Endothelial cell of umbilical vein (primary cell): ENCODE measurements at regions of chr9 and their contacts with region 1.

Region 1: DNA sequence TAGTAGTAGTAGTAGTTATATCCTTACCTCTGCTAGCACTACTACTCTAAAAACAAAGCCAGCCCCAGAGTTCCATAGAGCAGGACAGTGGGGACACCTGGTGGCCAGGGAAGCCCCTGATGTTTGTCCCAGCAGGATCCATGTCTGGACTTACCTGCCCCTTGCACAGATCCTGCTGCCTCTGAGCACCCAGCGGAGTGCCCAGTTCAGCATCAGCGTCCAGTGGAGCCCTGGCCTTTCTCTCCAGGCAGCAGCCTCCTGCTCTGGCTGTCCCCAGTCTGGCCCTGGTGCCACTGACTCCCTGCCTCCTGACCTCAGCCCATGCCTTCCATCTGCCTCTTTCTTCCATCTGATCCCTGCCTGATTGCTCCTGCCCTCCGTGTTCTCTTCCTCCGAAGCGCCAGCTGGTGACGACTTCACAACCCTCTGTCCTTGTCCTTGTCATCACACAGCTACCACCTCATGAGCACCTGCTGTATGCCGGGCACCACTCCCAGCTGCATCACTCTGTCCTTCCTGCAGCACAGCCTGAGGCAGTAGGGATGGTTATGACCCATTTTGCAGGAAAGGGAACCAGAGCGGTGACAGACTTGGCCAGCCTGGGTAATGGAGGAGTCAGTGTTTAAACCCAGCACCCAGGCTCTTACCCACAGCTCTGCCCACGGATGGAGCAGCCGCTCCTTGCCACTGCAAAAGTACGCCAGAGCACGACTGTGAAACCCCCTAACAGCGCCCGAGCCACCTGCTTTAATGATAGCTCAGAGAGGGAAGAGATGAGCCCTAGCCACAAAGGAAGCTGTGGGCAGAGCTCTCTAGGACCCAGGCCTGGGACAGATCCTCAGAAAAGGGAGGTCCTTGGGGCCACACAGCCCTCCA is 11.5 kb downstream of the SARDH start:
- DNase-seq: peak; percentile 24
- H3K4me3 ChIP-seq: no peak overlapping the region
- H3K27ac ChIP-seq: no peak overlapping the region
- H3K4me1 ChIP-seq: no peaks in the 10 kb centered on the region
- H3K27me3 ChIP-seq: no peaks in the 10 kb centered on the region
- CTCF ChIP-seq: peak; percentile 28 to 53
- POLR2A ChIP-seq: no peak

Region 2: DNA sequence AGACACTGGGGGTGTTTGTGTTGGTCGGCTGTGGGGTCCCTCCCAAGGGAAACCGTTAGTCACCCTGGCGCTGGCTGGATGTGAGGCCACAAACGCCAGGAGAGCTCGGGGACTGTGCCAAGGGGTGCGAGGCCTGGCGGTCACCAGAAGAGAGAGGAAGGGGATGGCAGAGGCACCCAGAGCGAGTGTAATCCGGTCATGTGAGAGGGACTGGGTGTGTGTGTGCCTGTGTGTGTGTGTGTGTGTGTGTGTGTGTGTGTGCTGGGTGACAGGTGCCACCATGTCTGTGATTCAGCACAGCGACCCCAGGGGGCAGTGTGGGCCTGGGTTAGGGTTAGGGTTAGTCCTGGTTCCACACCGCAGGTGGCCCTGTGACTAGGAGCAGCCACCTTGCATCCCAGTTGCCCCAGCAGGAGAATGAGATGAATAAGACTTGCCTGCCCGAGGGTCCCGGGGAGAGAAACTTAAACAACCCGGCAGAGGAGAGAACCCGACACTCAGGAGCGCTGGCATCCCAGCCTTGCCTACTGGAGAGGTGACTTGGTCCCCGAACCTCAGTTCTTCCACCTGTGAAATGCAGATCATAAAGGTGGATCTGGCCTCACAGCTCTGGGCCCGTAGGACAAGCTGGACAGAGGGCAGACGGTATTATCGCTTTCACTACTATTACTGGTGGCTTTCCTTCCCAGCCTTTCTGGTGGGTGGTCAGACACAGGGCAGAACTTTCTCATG is 193.5 kb before region 1 on chr9:
- CTCF ChIA-PET with region 1: interaction called, 5 read pairs
- POLR2A ChIA-PET with region 1: no interaction called
- dilution Hi-C with region 1: no loop called
- intact Hi-C with region 1: loop called (anchors 1 kb)
- DNase-seq: peak; percentile 26
- H3K4me3 ChIP-seq: no peak overlapping the region
- H3K27ac ChIP-seq: no peak overlapping the region
- H3K4me1 ChIP-seq: no peaks in the 10 kb centered on the region
- H3K27me3 ChIP-seq: peaks cover 9 to 15% of the 10 kb centered on the region in 2 experiments
- CTCF ChIP-seq: peak; percentile 42 to 64
- POLR2A ChIP-seq: no peak